IMR-90 (cell line): ENCODE measurements at regions of chr2 and their contacts with region 1.

Region 1: DNA sequence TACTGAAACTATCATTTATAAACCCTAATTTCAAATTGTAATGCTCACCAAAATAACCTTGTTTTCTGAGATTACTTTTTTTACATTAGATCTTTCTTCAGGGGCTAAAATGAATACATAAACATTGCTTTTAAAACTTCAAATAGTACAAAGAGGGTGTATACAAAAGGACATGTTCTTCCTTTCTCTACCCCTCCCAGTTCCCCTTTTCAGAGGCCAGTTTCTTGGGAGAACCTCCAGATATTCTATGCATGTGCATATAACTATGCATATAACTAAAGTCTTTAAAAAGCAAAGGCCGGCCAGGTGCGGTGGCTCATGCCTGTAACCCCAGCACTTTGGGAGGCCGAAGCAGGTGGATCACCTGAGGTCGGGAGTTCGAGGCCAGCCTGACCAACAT is 10.6 kb upstream of the FAM117B start:
- DNase-seq: no peak
- ATAC-seq: no peak
- H3K4me3 ChIP-seq: no peak overlapping the region
- H3K27ac ChIP-seq: no peak overlapping the region
- H3K4me1 ChIP-seq: peaks cover 3% of the 10 kb centered on the region; the same call in 1 of the 2 replicates
- H3K27me3 ChIP-seq: no peaks in the 10 kb centered on the region
- CTCF ChIP-seq: no peak
- POLR2A ChIP-seq: no peak
- RAD21 ChIP-seq: no peak

Region 2: GRCh38 chr2:202643012-202643858 is 19.1 kb after region 1 on chr2:
- CTCF ChIA-PET with region 1: no interaction called
- POLR2A ChIA-PET with region 1: no interaction called
- dilution Hi-C with region 1: no loop called
- in situ Hi-C with region 1: no loop called
- intact Hi-C with region 1: loop called (anchors 1 kb)
- DNase-seq: no peak
- ATAC-seq: no peak
- H3K4me3 ChIP-seq: no peak overlapping the region
- H3K27ac ChIP-seq: no peak overlapping the region
- H3K4me1 ChIP-seq: peaks cover 2% of the 10 kb centered on the region
- H3K27me3 ChIP-seq: no peaks in the 10 kb centered on the region
- CTCF ChIP-seq: no peak
- POLR2A ChIP-seq: no peak
- RAD21 ChIP-seq: no peak

Region 3: DNA sequence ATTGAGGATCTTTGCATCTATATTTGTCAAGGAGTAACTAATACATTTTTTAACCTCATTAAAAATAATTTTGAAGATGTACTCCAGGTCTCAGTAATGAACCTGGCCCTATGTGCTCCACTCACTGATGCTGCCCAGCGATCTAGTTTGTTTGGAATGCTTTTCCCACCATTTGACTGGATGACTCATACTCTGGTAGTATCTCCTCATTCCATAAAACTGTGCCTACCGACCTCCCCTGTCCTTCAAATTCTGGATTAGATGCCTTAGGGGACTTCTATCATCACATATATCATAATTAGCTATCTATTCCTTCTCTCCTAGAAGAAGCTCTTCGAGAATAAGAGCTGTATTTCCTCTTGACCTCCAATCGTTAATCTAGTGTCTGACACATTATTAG is 94.5 kb after region 1 on chr2:
- CTCF ChIA-PET with region 1: no interaction called
- POLR2A ChIA-PET with region 1: no interaction called
- dilution Hi-C with region 1: no loop called
- in situ Hi-C with region 1: no loop called
- intact Hi-C with region 1: no loop called
- DNase-seq: peak; percentile 72
- ATAC-seq: peak; percentile 66
- H3K4me3 ChIP-seq: no peak overlapping the region
- H3K27ac ChIP-seq: no peak overlapping the region
- H3K4me1 ChIP-seq: peaks cover 3% of the 10 kb centered on the region; the same call in 1 of the 2 replicates
- H3K27me3 ChIP-seq: no peaks in the 10 kb centered on the region
- CTCF ChIP-seq: no peak
- POLR2A ChIP-seq: no peak
- RAD21 ChIP-seq: no peak